ENCODE measurements at regions of chr7 and their contacts with region 1.

Region 1: DNA sequence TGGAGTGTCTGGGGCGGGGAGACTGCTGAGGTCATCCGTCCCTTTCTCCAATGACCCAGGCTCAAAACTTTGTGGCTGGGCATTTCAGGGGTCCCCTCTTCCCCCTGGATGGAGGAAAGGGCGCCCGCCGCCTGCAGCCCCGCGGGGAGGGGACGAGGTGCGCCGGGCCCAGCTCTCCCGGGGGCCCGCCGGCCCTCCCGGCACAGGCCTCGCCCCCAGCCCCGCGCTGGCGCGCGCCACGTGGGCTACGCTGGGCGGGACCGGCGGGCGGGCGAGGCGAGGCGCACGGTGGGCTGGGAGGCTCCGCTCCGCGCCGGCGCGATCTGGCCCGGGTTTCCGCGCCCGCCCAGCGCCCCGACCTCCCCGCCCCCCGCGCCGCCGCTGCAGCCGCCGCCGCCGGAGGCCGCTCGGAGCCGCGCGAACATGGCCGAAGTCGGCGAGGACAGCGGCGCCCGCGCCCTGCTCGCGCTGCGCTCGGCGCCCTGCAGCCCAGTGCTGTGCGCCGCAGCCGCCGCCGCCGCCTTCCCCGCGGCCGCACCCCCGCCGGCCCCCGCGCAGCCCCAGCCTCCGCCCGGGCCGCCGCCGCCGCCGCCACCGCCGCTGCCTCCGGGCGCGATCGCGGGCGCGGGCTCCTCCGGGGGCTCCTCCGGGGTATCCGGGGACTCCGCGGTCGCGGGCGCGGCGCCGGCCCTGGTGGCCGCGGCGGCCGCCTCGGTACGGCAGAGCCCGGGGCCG is at the start of gene FOXK1:
- DNase-seq: peak; percentile 75
- H3K4me3 Mint-ChIP-seq: peak within 1 kb of the TSS; percentile 81
- H3K27ac Mint-ChIP-seq: peak within 1 kb of the TSS; percentile 94
- H3K4me1 Mint-ChIP-seq: peaks cover 29% of the 10 kb centered on the region
- H3K27me3 Mint-ChIP-seq: no peaks in the 10 kb centered on the region
- total RNA-seq, gene FOXK1: 35.0 to 35.4 TPM

Region 2: DNA sequence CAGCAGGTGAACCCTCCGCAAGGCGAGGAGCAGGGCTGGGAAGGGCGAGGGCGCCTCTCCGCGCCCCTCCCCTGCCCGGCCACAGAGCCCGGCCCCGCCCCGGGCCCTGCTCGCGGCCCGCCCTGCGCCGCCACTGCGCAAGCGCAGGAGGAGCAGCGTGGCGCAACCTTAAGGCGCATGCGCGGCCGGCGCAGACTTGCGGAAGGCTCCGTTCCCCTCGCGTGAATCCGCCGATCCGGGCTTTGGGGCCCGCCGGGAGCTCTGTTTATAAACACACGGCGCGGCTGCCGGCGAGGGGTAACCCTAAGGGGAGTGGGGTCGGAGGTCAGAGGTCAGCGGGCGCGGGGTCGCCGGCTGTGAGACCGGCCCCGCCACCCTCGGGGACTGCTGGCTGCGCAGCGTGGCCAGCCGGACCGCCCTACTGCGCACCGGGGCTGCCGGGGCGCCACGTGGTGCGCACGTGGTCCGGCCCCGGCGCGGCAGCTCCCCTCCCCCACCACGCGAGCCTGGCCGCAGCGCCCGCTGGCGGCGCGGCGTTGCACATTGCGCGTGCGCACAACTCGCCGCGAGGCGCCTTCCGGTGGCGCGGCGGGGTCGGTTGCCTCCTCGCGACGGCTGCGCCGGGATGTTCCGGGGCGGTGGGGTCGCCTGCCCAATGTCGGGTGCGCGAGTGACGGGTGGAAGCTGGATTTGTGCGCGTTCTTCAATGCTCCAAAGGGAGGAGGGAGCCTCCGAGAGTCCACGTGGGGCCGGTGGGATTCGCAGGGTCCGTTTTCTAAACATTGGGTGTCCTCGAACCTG is 40.2 kb before region 1 on chr7:
- CTCF ChIA-PET with region 1: interaction called, 15 read pairs
- intact Hi-C with region 1: loop called (anchors 1 kb)
- DNase-seq: peak; percentile 94
- H3K4me3 Mint-ChIP-seq: peak overlapping the region; percentile 89
- H3K27ac Mint-ChIP-seq: peak overlapping the region; percentile 90
- H3K4me1 Mint-ChIP-seq: peaks cover 3% of the 10 kb centered on the region
- H3K27me3 Mint-ChIP-seq: no peaks in the 10 kb centered on the region

Region 3: GRCh38 chr7:4712281-4713182 is 30.5 kb after region 1 on chr7:
- CTCF ChIA-PET with region 1: no interaction called
- intact Hi-C with region 1: loop called (anchors 2 kb)
- DNase-seq: peak; percentile 41
- H3K4me3 Mint-ChIP-seq: no peak overlapping the region
- H3K27ac Mint-ChIP-seq: no peak overlapping the region
- H3K4me1 Mint-ChIP-seq: peaks cover 47% of the 10 kb centered on the region
- H3K27me3 Mint-ChIP-seq: no peaks in the 10 kb centered on the region

Region 4: DNA sequence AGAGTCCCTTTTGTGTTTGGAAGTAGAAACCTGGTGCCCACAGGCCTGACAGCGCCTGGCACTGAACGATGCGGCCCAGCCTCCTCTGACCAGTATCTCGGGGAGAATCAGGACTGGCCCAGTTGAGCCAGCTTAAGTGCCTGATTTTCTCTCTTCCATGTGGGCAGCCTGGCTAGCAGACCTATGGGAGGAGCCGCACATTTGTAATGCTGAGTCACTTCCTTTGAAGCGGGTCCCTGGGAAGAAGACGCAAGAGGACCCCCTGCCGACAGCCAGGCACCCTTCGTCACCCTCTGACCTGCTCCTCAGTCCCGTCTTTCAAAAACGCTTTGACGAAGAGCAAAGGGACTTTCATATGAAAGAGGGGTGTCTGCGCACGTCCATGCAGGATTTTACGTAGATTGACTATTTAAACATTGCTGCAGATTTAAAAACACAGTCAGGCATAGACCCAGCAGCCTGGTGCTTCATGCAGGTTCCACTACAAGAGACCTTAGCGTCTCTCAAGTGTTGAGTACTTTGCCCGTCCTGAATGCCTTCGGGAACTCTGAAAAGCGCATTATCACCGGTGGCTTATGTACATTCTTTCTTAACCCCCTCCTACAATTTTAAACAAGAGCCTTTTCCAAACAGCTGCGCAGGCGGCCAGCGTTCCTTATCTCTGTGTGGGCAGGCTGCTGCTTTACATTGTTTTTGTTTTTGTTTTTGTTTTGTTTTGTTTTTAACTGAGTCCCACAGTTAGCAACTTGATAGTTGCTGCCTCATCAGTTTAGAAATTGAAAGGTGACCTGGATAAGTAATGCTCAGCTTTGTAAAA is 56.9 kb after region 1 on chr7:
- CTCF ChIA-PET with region 1: interaction called, 3 read pairs
- intact Hi-C with region 1: loop called (anchors 1 kb)
- DNase-seq: peak; percentile 64
- H3K4me3 Mint-ChIP-seq: peak overlapping the region; percentile 67
- H3K27ac Mint-ChIP-seq: peak overlapping the region; percentile 84
- H3K4me1 Mint-ChIP-seq: peaks cover 50% of the 10 kb centered on the region
- H3K27me3 Mint-ChIP-seq: no peaks in the 10 kb centered on the region

Region 5: GRCh38 chr7:4753711-4754432 is 71.8 kb after region 1 on chr7:
- CTCF ChIA-PET with region 1: interaction called, 6 read pairs
- intact Hi-C with region 1: loop called (anchors 1 kb)
- DNase-seq: peak; percentile 93
- H3K4me3 Mint-ChIP-seq: no peak overlapping the region
- H3K27ac Mint-ChIP-seq: no peak overlapping the region
- H3K4me1 Mint-ChIP-seq: peaks cover 21% of the 10 kb centered on the region
- H3K27me3 Mint-ChIP-seq: no peaks in the 10 kb centered on the region

Region 6: DNA sequence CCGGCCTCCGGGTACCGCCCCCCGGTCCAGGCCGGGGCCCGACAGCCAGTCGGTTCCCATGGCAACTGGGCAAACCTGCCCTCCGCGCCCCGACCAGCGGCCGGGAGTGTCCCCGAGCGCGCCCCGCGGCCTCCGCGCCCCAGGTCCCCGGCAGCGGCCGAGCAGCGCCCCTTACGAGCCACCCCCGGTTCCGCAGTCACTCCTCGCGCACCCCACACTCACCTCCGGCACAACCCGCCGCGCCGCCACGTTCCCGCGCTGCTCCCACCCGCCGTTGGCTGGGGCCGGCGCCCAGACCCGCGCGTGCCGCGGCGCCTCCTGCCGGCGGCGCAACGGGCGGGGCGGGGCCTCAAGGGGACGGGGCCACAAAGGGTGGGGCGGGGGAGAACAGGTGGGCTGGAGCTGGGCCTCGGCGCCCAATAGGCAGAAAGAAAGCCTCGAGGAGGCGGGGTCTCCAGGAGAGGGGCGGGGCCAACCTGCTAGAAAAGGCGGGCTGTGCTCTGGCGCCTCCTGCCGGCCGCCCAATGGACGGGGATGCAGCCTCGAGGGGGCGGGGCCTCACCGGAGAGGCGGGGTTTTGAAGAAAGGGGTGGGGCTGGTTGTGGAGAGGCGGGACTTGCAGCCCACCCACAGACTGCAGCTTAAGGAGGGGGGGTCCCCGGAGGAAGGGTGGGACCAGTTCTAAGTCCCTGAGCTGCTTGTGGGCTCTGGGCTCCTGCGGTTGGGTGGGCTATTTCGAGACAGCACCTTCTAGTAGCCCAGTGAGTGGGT is 201.5 kb after region 1 on chr7 and contains the start of gene RADIL:
- CTCF ChIA-PET with region 1: no interaction called
- intact Hi-C with region 1: loop called (anchors 5 kb)
- DNase-seq: peak; percentile 96
- H3K4me3 Mint-ChIP-seq: peak within 1 kb of the TSS; percentile 56
- H3K27ac Mint-ChIP-seq: no peak within 1 kb of the TSS
- H3K4me1 Mint-ChIP-seq: peaks cover 10% of the 10 kb centered on the region
- H3K27me3 Mint-ChIP-seq: peaks cover 36% of the 10 kb centered on the region
- total RNA-seq, gene RADIL: 0.42 to 0.55 TPM

Region 7: DNA sequence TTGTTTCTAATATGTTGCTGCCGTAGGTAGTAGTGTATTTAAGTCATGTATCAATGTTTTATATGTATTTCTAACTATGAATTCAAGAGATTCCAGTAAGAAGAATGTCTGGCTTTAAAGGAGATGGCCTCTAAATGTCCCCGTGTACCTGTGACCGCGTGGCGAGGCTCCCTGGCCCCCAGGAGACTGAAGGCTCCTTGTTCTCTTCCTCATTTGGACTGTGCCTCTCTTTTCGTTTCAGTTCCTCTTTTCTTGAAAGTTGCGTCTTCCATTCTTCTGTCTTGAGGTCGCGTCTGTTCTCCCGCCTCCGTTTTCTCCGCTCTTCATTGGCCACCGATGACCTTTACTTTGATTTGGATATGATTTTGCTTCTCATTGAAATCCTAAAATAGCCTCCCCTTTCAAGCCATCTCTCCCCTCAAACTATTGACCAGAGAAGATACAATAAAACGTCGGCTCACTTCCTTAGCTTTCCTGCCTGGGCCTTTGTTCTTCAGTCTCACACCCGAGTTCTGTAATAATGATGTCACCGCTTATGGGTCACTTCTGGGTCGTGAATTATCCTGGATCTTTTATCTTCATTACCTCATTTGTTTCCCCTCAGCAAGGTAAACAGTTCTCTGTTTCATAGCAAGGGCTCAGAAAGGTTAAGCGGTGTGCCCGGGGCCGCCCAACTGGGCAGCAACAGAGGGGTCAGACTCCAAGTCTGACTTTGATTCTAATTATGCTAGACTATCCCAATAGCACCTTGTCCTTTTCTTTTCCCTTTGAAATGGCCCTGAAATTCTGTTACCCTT is 536.7 kb after region 1 on chr7:
- CTCF ChIA-PET with region 1: no interaction called
- intact Hi-C with region 1: no loop called
- DNase-seq: no peak
- H3K4me3 Mint-ChIP-seq: no peak overlapping the region
- H3K27ac Mint-ChIP-seq: no peak overlapping the region
- H3K4me1 Mint-ChIP-seq: no peaks in the 10 kb centered on the region
- H3K27me3 Mint-ChIP-seq: no peaks in the 10 kb centered on the region

Measured in activated naive CD4-positive, alpha-beta T cell treated with anti-CD3 and anti-CD28 coated beads for 36 hours (primary cell).